Sciatic nerve (tissue), 2 donors: ENCODE measurements at regions of chr19 and their contacts with region 1.

Region 1: GRCh38 chr19:38287604-38288003 is 16.4 kb upstream of the C19orf33 start:
- DNase-seq: no peak
- ATAC-seq: peak; percentile 49

Region 2: GRCh38 chr19:38095411-38096308 is 191.9 kb before region 1 on chr19:
- intact Hi-C with region 1: no loop called
- DNase-seq: peak; percentile 78
- ATAC-seq: peak; percentile 70

Region 3: GRCh38 chr19:40241809-40242384 is 1954.3 kb after region 1 on chr19:
- intact Hi-C with region 1: loop called (anchors 5 kb)
- DNase-seq: peak; percentile 77
- ATAC-seq: peak; percentile 78